ENCODE measurements at regions of chr9 and their contacts with region 1.

Region 1: DNA sequence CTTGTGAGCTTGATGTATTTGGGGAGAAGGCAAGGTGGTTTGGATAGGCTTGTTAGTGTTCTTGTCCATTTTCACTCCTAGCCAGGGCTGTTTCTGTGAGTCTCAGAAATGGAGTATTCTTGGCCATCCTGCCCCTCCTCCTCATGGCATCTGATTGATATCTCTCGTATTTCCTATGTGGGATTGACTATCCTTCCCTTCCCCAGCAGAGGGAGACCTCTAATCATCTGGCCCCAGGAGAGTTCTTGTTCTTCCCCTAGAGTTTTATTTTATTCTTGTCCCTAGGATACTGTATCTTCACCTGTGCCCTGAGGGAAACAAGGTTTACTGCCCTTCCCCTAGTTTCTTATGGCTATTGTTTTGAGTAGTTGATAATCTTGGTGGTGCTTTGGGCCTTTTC is 114.4 kb downstream of the VPS13A start:
- DNase-seq: no peak
- H3K4me3 ChIP-seq: no peak overlapping the region
- H3K27ac ChIP-seq: no peak overlapping the region
- H3K27me3 ChIP-seq: no peaks in the 10 kb centered on the region
- CTCF ChIP-seq: peak; percentile 60

Region 2: DNA sequence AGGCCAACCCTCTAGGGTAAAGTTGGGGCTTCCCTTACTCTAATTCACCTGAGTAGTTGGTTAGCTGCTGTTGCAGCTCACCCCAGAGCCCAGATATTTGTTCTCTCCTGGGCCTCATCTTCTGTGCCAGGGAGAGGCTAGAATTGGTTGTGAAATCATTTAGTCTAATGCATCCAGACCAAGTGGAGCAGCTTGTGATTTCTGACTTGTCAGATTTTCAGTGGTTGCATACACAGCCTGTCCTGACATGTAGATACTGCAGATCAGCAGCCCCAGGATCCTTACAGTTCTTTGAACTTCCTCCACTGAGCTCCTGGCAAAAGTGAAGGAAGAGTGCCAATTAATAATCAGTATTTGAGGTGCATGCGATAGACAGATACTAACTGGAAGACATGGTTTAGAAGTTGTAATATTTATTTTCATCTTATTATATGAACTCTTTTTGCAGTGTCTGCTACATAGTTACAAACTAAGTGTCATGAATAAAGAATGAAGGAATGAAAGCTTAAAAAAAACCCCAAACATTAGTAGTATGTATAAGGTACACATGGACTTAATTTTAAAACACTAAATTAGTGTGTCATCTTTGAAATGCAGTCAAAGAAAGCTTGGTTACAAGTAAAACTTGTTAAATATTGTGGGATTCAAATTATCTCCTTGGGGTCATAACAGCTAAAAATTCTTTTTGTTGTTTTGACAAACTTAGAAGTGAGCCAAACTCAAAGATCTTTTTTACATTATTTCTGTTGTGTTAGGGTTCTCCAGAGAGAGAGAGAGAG is 14.1 kb after region 1 on chr9:
- CTCF ChIA-PET with region 1: interaction called, 13 read pairs
- POLR2A ChIA-PET with region 1: no interaction called
- DNase-seq: no peak
- H3K4me3 ChIP-seq: no peak overlapping the region
- H3K27ac ChIP-seq: peak overlapping the region; percentile 62
- H3K27me3 ChIP-seq: no peaks in the 10 kb centered on the region
- CTCF ChIP-seq: no peak